ENCODE measurements at regions of chr3 and their contacts with region 1.

Region 1: GRCh38 chr3:31531992-31532586 is 636 bp upstream of the STT3B start:
- DNase-seq: peak; percentile 99
- H3K4me3 Mint-ChIP-seq: peak overlapping the region; percentile 95
- H3K27ac Mint-ChIP-seq: peak overlapping the region; percentile 99
- H3K4me1 Mint-ChIP-seq: peaks cover 13% of the 10 kb centered on the region
- H3K27me3 Mint-ChIP-seq: no peaks in the 10 kb centered on the region

Region 2: GRCh38 chr3:30347679-30348216 is 1184.3 kb before region 1 on chr3:
- CTCF ChIA-PET with region 1: no interaction called
- intact Hi-C with region 1: loop called (anchors 10 kb)
- DNase-seq: peak; percentile 73
- H3K4me3 Mint-ChIP-seq: peak overlapping the region; percentile 8
- H3K27ac Mint-ChIP-seq: peak overlapping the region; percentile 80
- H3K4me1 Mint-ChIP-seq: peaks cover 89% of the 10 kb centered on the region
- H3K27me3 Mint-ChIP-seq: no peaks in the 10 kb centered on the region

Region 3: GRCh38 chr3:30693470-30694120 is 838.5 kb before region 1 on chr3:
- CTCF ChIA-PET with region 1: no interaction called
- intact Hi-C with region 1: loop called (anchors 10 kb)
- DNase-seq: peak; percentile 51
- H3K4me3 Mint-ChIP-seq: no peak overlapping the region
- H3K27ac Mint-ChIP-seq: peak overlapping the region; percentile 76
- H3K4me1 Mint-ChIP-seq: peaks cover 69% of the 10 kb centered on the region
- H3K27me3 Mint-ChIP-seq: no peaks in the 10 kb centered on the region

Region 4: GRCh38 chr3:31253782-31254181 is 278.3 kb before region 1 on chr3:
- CTCF ChIA-PET with region 1: no interaction called
- intact Hi-C with region 1: loop called (anchors 1 kb)
- DNase-seq: peak; percentile 59
- H3K4me3 Mint-ChIP-seq: no peak overlapping the region
- H3K27ac Mint-ChIP-seq: peak overlapping the region; percentile 65
- H3K4me1 Mint-ChIP-seq: peaks cover 51% of the 10 kb centered on the region
- H3K27me3 Mint-ChIP-seq: no peaks in the 10 kb centered on the region

Region 5: GRCh38 chr3:31550452-31551251 is 18.6 kb after region 1 on chr3:
- CTCF ChIA-PET with region 1: interaction called, 4 read pairs
- intact Hi-C with region 1: loop called (anchors 1 kb)
- DNase-seq: peak; percentile 32
- H3K4me3 Mint-ChIP-seq: no peak overlapping the region
- H3K27ac Mint-ChIP-seq: peak overlapping the region; percentile 48
- H3K4me1 Mint-ChIP-seq: peaks cover 77% of the 10 kb centered on the region
- H3K27me3 Mint-ChIP-seq: no peaks in the 10 kb centered on the region

Region 6: DNA sequence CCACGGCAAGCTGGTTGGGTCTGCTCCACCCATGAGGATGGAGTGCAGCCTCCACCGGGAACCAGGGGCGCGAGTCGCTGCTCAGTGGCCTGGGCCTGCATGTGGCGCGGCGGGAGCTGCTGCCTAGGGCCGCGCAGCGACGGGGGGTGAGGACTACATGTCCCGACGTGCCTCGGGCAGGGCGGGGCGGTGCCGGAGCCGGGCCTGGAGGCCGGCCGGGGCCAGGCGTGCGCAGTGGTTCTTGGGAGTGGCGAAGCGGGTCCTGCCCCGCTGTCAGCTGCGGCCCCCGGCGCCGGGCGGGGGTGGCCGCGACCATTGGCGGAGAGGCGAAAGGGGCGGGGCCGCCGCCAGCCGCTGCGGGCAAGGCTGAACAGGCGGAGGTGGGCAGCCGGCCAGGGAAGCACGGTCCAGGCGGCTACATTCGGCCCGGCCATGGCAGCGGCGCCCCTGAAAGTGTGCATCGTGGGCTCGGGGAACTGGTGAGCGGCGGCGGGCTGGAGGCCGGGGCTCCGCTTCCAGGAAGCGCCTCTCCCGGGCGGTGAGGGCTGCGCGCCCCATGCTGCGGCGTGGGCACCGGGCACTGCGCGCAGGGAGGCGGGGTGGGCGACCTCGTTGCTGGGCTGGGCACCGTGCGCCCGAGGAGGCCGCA is 574.3 kb after region 1 on chr3 and contains the start of gene GPD1L:
- CTCF ChIA-PET with region 1: no interaction called
- intact Hi-C with region 1: loop called (anchors 1 kb)
- DNase-seq: peak; percentile 92
- H3K4me3 Mint-ChIP-seq: peak within 1 kb of the TSS; percentile 96
- H3K27ac Mint-ChIP-seq: peak within 1 kb of the TSS; percentile 46
- H3K4me1 Mint-ChIP-seq: peaks cover 30% of the 10 kb centered on the region
- H3K27me3 Mint-ChIP-seq: no peaks in the 10 kb centered on the region
- total RNA-seq, gene GPD1L: 10.8 to 12.6 TPM

Region 7: DNA sequence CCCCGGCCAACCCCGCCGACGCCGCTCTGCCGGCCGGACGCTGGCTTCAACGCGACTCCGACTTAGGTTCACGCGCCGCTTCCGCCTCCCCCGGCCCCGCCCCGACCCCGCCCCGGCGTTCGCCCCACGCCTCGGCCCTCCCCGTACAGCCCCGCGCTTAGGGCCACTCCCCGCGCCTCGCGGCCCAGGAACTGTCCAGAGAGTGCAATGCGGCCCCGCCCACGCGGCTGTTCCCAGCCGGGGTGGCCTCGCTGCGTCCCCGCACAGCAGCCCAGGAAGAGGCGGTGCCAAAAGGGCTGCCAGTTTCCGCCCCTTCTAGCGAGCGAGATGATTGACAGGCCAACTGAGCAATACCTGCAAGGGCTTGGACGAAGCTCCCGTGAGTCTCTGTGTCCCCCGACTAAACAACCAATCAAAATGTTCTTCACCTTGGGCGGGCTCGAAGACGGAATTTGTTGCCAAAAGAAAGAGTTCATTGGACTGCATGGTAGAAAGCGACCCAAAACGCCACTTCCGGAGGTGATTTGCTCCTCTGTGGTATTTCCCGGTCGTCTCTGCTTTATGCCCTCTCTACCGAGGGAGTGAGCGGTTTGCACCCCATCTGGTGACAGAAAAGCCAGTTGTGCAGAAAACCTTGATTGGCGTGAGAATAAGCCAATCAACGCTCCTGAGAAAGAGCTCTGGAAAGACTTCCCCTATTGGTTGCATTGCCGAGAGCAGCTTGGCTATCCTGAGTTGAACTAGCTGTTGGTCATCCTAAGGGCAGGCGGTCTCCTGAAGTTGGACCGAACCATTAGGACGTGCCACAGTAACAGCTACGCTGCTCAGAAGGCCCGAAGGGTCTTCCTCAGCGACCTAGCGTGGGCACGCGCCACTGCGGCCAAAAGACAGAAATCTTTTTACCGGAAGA is 1908.5 kb after region 1 on chr3 and contains the start of gene UBP1:
- CTCF ChIA-PET with region 1: no interaction called
- intact Hi-C with region 1: loop called (anchors 5 kb)
- DNase-seq: peak; percentile 99
- H3K4me3 Mint-ChIP-seq: peak within 1 kb of the TSS; percentile 99
- H3K27ac Mint-ChIP-seq: peak within 1 kb of the TSS; percentile 100
- H3K4me1 Mint-ChIP-seq: peaks cover 34% of the 10 kb centered on the region
- H3K27me3 Mint-ChIP-seq: no peaks in the 10 kb centered on the region
- total RNA-seq, gene UBP1: 42.8 to 44.0 TPM

Measured in activated naive CD4-positive, alpha-beta T cell treated with anti-CD3 and anti-CD28 coated beads for 36 hours (primary cell).